CD4-positive, alpha-beta memory T cell (primary cell): ENCODE measurements at regions of chr1 and their contacts with region 1.

Region 1: GRCh38 chr1:67149179-67149770 is 14.5 kb upstream of the C1orf141 start:
- DNase-seq: peak; percentile 43 to 62 (median 56)
- H3K4me3 ChIP-seq: no peak overlapping the region
- H3K4me3 Mint-ChIP-seq: peak overlapping the region in 1 of 8 donors; percentile 23
- H3K27ac ChIP-seq: no peak overlapping the region
- H3K27ac Mint-ChIP-seq: peak overlapping the region in 1 of 7 donors; percentile 14
- H3K4me1 ChIP-seq: peaks cover 18% of the 10 kb centered on the region
- H3K4me1 Mint-ChIP-seq: peaks cover 17 to 38% (median 23%) of the 10 kb centered on the region in 4 donors
- H3K27me3 ChIP-seq: no peaks in the 10 kb centered on the region
- H3K27me3 Mint-ChIP-seq: peaks cover 1 to 2% of the 10 kb centered on the region in 2 donors

Region 2: GRCh38 chr1:65668368-65668767 is 1480.9 kb before region 1 on chr1:
- CTCF ChIA-PET with region 1: no interaction called
- POLR2A ChIA-PET with region 1: no interaction called
- intact Hi-C with region 1: no loop called
- DNase-seq: no peak
- H3K4me3 ChIP-seq: no peak overlapping the region
- H3K4me3 Mint-ChIP-seq: no peak overlapping the region
- H3K27ac ChIP-seq: no peak overlapping the region
- H3K27ac Mint-ChIP-seq: no peak overlapping the region
- H3K4me1 ChIP-seq: no peaks in the 10 kb centered on the region
- H3K4me1 Mint-ChIP-seq: no peaks in the 10 kb centered on the region
- H3K27me3 ChIP-seq: peaks cover 3% of the 10 kb centered on the region
- H3K27me3 Mint-ChIP-seq: peaks cover 10 to 18% of the 10 kb centered on the region in 2 donors

Region 3: GRCh38 chr1:66929999-66930822 is 219.1 kb before region 1 on chr1:
- CTCF ChIA-PET with region 1: interaction called, 3 read pairs
- POLR2A ChIA-PET with region 1: no interaction called
- intact Hi-C with region 1: loop called (anchors 10 kb)
- DNase-seq: peak; percentile 90 to 95 (median 93)
- H3K4me3 ChIP-seq: peak overlapping the region; percentile 67 to 95
- H3K4me3 Mint-ChIP-seq: peak overlapping the region; percentile 83 to 95 (median 89)
- H3K27ac ChIP-seq: peak overlapping the region; percentile 95
- H3K27ac Mint-ChIP-seq: peak overlapping the region; percentile 76 to 97 (median 95)
- H3K4me1 ChIP-seq: peaks cover 63% of the 10 kb centered on the region
- H3K4me1 Mint-ChIP-seq: peaks cover 36 to 81% (median 51%) of the 10 kb centered on the region in 4 donors
- H3K27me3 ChIP-seq: no peaks in the 10 kb centered on the region
- H3K27me3 Mint-ChIP-seq: no peaks in the 10 kb centered on the region

Region 4: DNA sequence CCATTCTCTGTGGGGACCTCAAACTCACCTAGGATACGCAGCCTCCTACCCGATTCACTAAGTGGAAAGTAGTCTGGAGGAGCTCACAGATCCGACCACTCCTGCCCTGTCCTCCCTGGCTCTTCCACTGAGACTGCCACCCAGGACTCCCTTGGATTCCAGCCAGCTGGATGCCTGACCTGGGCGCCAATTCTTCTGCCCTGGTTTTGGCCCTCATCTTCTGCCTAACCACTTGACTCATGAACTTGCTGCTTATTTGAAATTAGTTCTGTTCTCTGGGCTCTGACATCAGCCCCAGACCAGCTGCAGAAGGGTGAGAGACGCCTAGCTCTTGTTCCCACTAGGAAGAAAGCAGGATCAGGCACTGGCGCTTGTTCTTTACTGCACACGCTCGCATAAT is 144.2 kb before region 1 on chr1:
- CTCF ChIA-PET with region 1: interaction called, 15 read pairs
- POLR2A ChIA-PET with region 1: no interaction called
- intact Hi-C with region 1: no loop called
- DNase-seq: no peak
- H3K4me3 ChIP-seq: no peak overlapping the region
- H3K4me3 Mint-ChIP-seq: no peak overlapping the region
- H3K27ac ChIP-seq: no peak overlapping the region
- H3K27ac Mint-ChIP-seq: peak overlapping the region in 4 of 7 donors; percentile 5 to 80 (median 38)
- H3K4me1 ChIP-seq: no peaks in the 10 kb centered on the region
- H3K4me1 Mint-ChIP-seq: peaks cover 0 to 5% (median under 1%) of the 10 kb centered on the region in 4 donors
- H3K27me3 ChIP-seq: no peaks in the 10 kb centered on the region
- H3K27me3 Mint-ChIP-seq: no peaks in the 10 kb centered on the region

Region 5: DNA sequence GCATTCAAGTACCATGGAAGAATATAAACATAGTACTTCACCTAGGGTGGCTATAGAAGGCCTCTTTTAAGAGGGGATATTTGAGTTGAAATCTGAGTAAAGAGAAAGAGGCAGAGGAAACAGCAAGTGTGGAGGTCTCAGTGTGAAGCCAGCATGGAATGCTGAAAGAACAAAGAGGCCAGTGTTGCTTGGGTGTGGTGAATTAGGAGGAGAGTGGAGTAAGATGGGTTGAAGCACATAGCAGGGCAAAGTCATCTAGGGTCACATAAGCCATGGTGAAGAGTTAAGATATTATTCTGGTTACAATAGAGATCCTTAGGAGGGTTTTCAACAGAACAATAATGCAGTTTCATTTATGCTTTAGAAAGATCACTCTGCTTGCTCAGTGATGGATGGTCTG is 52.0 kb before region 1 on chr1:
- CTCF ChIA-PET with region 1: no interaction called
- POLR2A ChIA-PET with region 1: no interaction called
- intact Hi-C with region 1: no loop called
- DNase-seq: no peak
- H3K4me3 ChIP-seq: no peak overlapping the region
- H3K4me3 Mint-ChIP-seq: no peak overlapping the region
- H3K27ac ChIP-seq: no peak overlapping the region
- H3K27ac Mint-ChIP-seq: no peak overlapping the region
- H3K4me1 ChIP-seq: no peaks in the 10 kb centered on the region
- H3K4me1 Mint-ChIP-seq: no peaks in the 10 kb centered on the region
- H3K27me3 ChIP-seq: peaks cover 9% of the 10 kb centered on the region
- H3K27me3 Mint-ChIP-seq: peaks cover 0 to 10% of the 10 kb centered on the region in 2 donors

Region 6: DNA sequence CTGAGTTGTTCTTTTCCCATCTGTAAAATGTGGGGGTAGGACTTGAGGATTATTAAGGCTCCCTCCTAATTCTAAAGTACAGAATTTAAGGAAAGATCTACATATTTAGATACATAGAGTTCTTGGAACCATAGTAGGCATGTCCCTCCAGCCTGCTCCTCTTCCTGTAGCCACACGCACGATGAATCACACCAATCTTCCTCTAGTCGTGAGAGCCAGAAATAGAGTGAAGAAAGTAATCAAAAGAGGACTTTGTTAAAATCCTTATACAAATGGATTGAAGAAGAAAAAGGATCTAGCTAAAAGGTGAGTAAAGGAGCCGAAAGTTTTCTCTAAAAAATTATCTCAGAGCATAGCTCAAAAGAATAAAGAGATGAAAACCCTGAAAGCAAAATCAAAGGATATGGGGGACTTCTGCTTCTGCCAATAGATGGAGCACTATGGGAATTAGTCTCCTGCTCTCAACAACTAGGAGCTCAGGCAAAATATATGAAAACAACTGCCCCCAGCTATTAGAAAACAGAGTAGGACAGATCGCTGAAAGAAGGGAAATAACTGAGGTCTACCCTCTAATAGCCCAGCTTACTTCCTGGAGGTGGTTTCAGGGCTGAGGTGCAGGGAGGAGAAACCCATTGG is 23.0 kb before region 1 on chr1:
- CTCF ChIA-PET with region 1: interaction called, 15 read pairs
- POLR2A ChIA-PET with region 1: no interaction called
- intact Hi-C with region 1: no loop called
- DNase-seq: no peak
- H3K4me3 ChIP-seq: no peak overlapping the region
- H3K4me3 Mint-ChIP-seq: no peak overlapping the region
- H3K27ac ChIP-seq: no peak overlapping the region
- H3K27ac Mint-ChIP-seq: no peak overlapping the region
- H3K4me1 ChIP-seq: no peaks in the 10 kb centered on the region
- H3K4me1 Mint-ChIP-seq: no peaks in the 10 kb centered on the region
- H3K27me3 ChIP-seq: no peaks in the 10 kb centered on the region
- H3K27me3 Mint-ChIP-seq: no peaks in the 10 kb centered on the region

Region 7: GRCh38 chr1:67162957-67163356 is 13.7 kb after region 1 on chr1:
- CTCF ChIA-PET with region 1: interaction called, 18 read pairs
- POLR2A ChIA-PET with region 1: no interaction called
- intact Hi-C with region 1: no loop called
- DNase-seq: peak in 1 of 5 donors; percentile 52
- H3K4me3 ChIP-seq: no peak overlapping the region
- H3K4me3 Mint-ChIP-seq: peak overlapping the region in 1 of 8 donors; percentile 47
- H3K27ac ChIP-seq: no peak overlapping the region
- H3K27ac Mint-ChIP-seq: peak overlapping the region in 3 of 7 donors; percentile 38 to 82 (median 53)
- H3K4me1 ChIP-seq: no peaks in the 10 kb centered on the region
- H3K4me1 Mint-ChIP-seq: peaks cover 12 to 32% (median 15%) of the 10 kb centered on the region in 4 donors
- H3K27me3 ChIP-seq: peaks cover 4% of the 10 kb centered on the region
- H3K27me3 Mint-ChIP-seq: peaks cover 0 to 4% of the 10 kb centered on the region in 2 donors

Region 8: DNA sequence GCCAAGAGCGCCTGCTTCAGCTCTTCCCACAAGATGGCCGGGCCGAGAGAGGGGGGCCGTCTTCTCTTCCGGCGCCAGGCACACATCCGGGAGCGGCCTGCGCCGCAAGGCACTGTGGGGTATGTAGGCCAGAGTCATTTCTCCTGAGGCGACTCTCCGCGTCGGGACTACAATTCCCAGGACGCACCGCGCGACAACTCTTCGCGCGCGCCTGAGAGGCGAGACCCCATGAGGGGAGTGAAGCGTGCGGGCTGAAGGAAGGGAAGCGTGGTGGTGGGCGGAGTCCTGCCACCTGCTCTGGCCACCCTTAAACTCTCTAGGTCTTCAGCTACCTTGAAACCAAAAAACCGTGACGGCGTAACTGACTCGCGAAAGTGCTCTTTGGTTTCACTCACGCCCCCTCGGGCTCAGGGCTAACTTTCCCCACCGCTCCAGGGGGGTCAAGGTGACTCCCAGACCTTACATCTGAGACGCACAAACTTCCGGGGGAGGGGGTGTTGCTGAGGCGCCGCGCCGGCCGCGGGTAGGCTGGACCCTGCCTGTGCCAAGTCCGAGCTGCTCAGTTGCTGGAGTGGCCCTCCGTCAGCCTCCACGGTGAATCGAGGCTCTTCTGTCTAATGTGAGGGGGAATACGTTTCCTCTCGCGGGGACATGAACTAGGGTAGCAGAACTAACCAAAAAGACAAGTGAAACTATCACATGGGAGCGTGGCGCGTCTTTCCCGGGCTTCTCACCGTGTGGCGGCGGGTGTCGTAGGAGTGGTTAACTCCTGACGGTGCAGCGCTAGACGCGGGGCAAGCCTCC is 281.3 kb after region 1 on chr1 and contains the start of gene SERBP1:
- CTCF ChIA-PET with region 1: no interaction called
- POLR2A ChIA-PET with region 1: no interaction called
- intact Hi-C with region 1: loop called (anchors 10 kb)
- DNase-seq: peak; percentile 94 to 97 (median 96)
- H3K4me3 ChIP-seq: peak within 1 kb of the TSS; percentile 87 to 91
- H3K4me3 Mint-ChIP-seq: peak within 1 kb of the TSS; percentile 92 to 99 (median 95)
- H3K27ac ChIP-seq: peak within 1 kb of the TSS; percentile 88
- H3K27ac Mint-ChIP-seq: peak within 1 kb of the TSS; percentile 96 to 99 (median 98)
- H3K4me1 ChIP-seq: peaks cover 36% of the 10 kb centered on the region
- H3K4me1 Mint-ChIP-seq: peaks cover 29 to 57% (median 34%) of the 10 kb centered on the region in 4 donors
- H3K27me3 ChIP-seq: no peaks in the 10 kb centered on the region
- H3K27me3 Mint-ChIP-seq: no peaks in the 10 kb centered on the region
- total RNA-seq, gene SERBP1: 148 to 154 TPM